GM18951 (cell line): ENCODE measurements at regions of chr9 and their contacts with region 1.

Region 1: GRCh38 chr9:5437254-5438216 is at the start of gene PLGRKT:
- POLR2A ChIP-seq: peak; percentile 94

Region 2: DNA sequence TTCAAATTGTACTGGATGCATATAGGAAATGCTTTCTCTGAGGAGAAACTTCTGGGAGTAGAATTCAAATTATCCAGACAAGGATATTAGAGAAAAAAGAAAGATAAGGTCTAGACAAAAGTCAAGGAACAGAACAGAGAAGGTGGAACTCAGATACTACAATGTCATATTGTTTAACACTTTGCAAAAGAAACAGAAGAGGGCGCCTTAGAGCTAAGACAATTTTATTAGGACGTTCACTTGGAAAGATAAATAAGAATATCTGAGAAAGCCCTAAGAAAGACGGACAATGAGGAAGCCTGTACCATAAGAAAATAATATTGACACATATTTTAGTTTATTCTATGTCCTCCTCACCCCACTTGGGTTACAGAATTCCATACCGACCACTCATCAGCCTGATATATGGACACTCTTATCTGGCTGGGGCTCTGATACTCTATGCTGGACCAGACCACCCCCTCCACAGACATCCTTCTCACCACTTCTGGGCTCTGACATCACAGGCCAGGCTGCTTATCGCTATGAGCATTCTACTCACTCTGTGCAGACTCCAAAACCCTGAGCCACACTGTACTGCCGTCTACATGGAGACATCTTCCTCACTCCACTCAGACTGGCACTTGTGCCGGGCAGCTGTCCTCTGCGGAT is 687.4 kb before region 1 on chr9:
- in situ Hi-C with region 1: loop called (anchors 10 kb)
- POLR2A ChIP-seq: no peak

Region 3: DNA sequence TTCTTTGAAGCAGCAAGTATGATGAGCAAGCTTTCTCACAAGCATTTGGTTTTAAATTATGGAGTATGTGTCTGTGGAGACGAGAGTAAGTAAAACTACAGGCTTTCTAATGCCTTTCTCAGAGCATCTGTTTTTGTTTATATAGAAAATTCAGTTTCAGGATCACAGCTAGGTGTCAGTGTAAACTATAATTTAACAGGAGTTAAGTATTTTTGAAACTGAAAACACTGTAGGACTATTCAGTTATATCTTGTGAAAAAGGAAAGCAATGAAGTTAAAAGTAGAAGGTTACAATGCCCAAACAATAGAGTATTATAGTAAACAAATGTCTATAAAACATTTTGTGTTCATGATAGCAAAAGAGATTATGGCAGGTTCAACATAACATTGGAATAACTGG is 363.8 kb before region 1 on chr9:
- in situ Hi-C with region 1: loop called (anchors 10 kb)
- POLR2A ChIP-seq: no peak

Region 4: GRCh38 chr9:5586391-5586802 is 148.9 kb after region 1 on chr9:
- in situ Hi-C with region 1: loop called (anchors 5 kb)
- POLR2A ChIP-seq: no peak